ENCODE measurements at regions of chr5 and their contacts with region 1.

Region 1: DNA sequence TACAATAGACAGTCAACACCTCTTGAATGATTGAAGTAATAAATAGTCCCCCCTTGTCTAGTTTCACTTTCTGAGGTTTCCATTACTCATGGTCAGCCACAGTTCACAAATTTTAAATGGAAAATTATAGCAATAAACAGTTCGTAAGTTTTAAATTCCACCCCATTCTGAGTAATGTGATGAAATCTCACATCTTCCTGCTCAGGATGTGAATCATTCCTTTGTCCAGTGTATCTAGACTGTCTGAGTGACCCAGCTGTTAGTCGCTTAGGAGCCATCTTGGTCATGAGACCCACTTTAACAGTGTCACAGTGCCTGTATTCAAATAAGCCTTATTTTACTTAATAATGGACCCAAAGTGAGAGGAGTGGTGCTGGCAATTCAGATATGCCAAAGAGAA is 311.6 kb upstream of the PRR16 start:
- DNase-seq: no peak
- ATAC-seq: peak in 3 of 4 donors; percentile 66 to 93 (median 70)
- H3K4me3 ChIP-seq: no peak overlapping the region
- H3K27ac ChIP-seq: peak overlapping the region in 4 of 12 donors; percentile 12 to 37 (median 18)
- H3K4me1 ChIP-seq: no peaks in the 10 kb centered on the region
- H3K27me3 ChIP-seq: no peaks in the 10 kb centered on the region
- CTCF ChIP-seq: no peak
- POLR2A ChIP-seq: no peak

Region 2: DNA sequence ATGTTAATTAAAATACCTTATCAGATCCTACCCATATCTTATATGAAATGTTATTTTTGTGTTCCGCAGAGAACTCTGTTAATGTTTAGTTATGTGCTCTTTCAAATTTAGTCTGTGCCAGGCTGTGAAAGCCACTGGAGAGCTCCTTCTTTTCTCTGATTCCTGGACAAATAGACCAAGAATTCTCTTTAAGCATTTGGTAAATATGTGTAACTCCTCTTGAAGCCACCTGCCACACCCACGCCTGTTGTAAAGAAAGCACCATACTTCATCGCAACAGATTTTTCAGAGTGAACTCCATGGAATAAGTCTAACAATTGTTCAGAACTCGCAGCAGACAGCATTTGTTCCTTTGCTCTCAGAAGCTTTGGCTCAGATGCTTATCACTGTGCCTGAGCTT is 222.0 kb before region 1 on chr5:
- intact Hi-C with region 1: no loop called
- DNase-seq: no peak
- ATAC-seq: no peak
- H3K4me3 ChIP-seq: no peak overlapping the region
- H3K27ac ChIP-seq: no peak overlapping the region
- H3K4me1 ChIP-seq: no peaks in the 10 kb centered on the region
- H3K27me3 ChIP-seq: no peaks in the 10 kb centered on the region
- CTCF ChIP-seq: no peak
- POLR2A ChIP-seq: no peak

Region 3: DNA sequence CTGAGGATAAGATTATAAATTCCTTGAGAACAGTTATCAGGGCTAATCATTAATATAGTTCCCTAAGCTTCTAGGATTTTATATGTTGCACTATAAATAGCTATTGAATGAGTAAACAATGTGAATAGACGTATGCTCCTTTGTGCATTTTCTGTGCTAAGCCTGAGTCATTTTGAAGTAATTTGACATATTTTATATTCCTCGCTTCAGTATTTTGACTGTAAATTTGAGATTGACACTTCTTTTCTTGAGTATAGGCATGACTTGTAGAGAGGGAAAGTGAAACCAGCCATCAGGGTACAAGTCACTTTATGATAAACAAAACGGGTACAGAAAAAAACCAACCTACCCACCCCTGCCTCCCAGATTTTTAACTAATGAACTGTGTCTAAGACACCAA is 56.1 kb before region 1 on chr5:
- intact Hi-C with region 1: loop called in 1 of 10 experiments (anchors 10 kb)
- DNase-seq: no peak
- ATAC-seq: no peak
- H3K4me3 ChIP-seq: peak overlapping the region in 6 of 12 donors; percentile 2 to 36 (median 24)
- H3K27ac ChIP-seq: no peak overlapping the region
- H3K4me1 ChIP-seq: peaks cover 0 to 13% (median 0%) of the 10 kb centered on the region in 12 donors
- H3K27me3 ChIP-seq: no peaks in the 10 kb centered on the region
- CTCF ChIP-seq: no peak
- POLR2A ChIP-seq: no peak

Region 4: DNA sequence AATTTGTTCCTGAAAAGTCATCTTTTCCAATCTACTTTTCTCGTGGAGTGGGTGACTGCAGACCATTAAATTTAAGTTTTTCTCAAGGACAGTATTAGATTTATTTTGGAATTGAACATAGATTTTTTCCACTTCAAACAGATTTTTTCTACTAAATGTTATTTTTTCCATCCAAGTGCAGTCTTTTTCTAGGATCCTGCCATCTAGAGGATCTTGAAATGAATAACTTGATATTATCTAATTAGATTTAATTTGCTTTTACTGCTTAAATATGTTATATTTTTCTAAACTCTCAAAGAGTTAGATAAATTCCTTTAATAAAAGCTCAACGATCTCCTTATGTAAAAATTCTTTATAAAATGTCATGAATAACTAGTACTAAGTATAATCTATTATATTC is 174.7 kb after region 1 on chr5:
- intact Hi-C with region 1: no loop called
- DNase-seq: no peak
- ATAC-seq: no peak
- H3K4me3 ChIP-seq: no peak overlapping the region
- H3K27ac ChIP-seq: no peak overlapping the region
- H3K4me1 ChIP-seq: no peaks in the 10 kb centered on the region
- H3K27me3 ChIP-seq: no peaks in the 10 kb centered on the region
- CTCF ChIP-seq: peak in 4 of 12 donors; percentile 26 to 35 (median 28)
- POLR2A ChIP-seq: no peak

Region 5: DNA sequence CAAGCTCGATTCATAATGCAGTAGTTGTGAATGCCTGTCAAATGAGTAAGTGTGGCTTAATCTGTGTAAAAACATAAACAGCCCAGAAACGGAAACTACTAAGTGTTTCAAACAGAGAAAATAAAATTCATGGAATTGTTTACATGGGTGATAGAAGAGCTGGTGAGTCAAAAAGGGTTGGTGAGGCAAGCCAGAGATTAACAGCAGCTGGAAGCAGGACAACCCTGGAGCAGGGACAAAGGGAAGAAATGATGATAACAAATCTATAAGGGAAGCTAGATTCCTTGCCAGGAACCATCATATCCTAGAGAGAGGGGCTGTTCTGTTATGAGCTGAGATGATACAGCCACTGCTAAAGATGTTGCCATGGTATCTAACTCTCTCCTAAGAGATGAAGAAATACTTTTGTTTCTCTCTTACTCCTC is 293.6 kb after region 1 on chr5:
- intact Hi-C with region 1: loop called in 2 of 10 experiments (anchors 10 kb)
- DNase-seq: peak in 1 of 5 donors; percentile 26
- ATAC-seq: peak; percentile 22 to 58 (median 52)
- H3K4me3 ChIP-seq: no peak overlapping the region
- H3K27ac ChIP-seq: peak overlapping the region in 9 of 12 donors; percentile 8 to 87 (median 65)
- H3K4me1 ChIP-seq: peaks cover 0 to 37% (median 11%) of the 10 kb centered on the region in 12 donors
- H3K27me3 ChIP-seq: no peaks in the 10 kb centered on the region
- CTCF ChIP-seq: no peak
- POLR2A ChIP-seq: no peak

Region 6: DNA sequence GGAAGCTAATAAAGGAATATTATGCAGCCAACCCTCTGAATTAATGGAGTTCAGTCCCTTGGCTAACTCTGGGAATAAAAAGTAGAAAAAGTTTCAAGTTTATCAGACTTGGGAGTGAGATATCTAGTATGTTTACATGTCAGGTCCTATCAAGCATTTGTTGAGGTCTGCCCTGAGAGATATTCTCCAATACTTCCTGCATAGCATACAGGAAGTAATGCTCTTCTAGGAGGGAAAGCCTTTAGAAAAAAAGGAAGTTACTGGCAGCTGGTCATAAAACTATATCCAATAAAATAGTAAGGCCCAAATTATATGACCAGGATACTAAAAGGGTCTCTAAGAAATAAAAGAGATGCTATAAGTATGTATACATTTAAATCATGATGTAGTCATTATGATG is 1105.1 kb after region 1 on chr5:
- intact Hi-C with region 1: no loop called
- DNase-seq: no peak
- ATAC-seq: no peak
- H3K4me3 ChIP-seq: no peak overlapping the region
- H3K27ac ChIP-seq: no peak overlapping the region
- H3K4me1 ChIP-seq: no peaks in the 10 kb centered on the region
- H3K27me3 ChIP-seq: no peaks in the 10 kb centered on the region
- CTCF ChIP-seq: no peak
- POLR2A ChIP-seq: no peak

Measured in heart left ventricle (tissue), 16 donors.